Activated B cell treated with CpG ODN at 0.5 μM for 24 hours (primary cell): ENCODE measurements at regions of chr3 and their contacts with region 1.

Region 1: GRCh38 chr3:172536993-172537419 is 13.8 kb upstream of the TNFSF10 start:
- DNase-seq: no peak
- ATAC-seq: no peak
- H3K4me3 Mint-ChIP-seq: no peak overlapping the region
- H3K27ac Mint-ChIP-seq: peak overlapping the region; percentile 60
- H3K4me1 Mint-ChIP-seq: peaks cover 11% of the 10 kb centered on the region
- H3K27me3 Mint-ChIP-seq: no peaks in the 10 kb centered on the region
- CTCF ChIP-seq: no peak

Region 2: GRCh38 chr3:171218069-171218468 is 1318.9 kb before region 1 on chr3:
- CTCF ChIA-PET with region 1: no interaction called
- POLR2A ChIA-PET with region 1: no interaction called
- intact Hi-C with region 1: no loop called
- DNase-seq: no peak
- ATAC-seq: no peak
- H3K4me3 Mint-ChIP-seq: no peak overlapping the region
- H3K27ac Mint-ChIP-seq: no peak overlapping the region
- H3K4me1 Mint-ChIP-seq: no peaks in the 10 kb centered on the region
- H3K27me3 Mint-ChIP-seq: no peaks in the 10 kb centered on the region
- CTCF ChIP-seq: no peak

Region 3: GRCh38 chr3:172074586-172074985 is 462.4 kb before region 1 on chr3:
- CTCF ChIA-PET with region 1: no interaction called
- POLR2A ChIA-PET with region 1: no interaction called
- intact Hi-C with region 1: no loop called
- DNase-seq: no peak
- ATAC-seq: no peak
- H3K4me3 Mint-ChIP-seq: no peak overlapping the region
- H3K27ac Mint-ChIP-seq: no peak overlapping the region
- H3K4me1 Mint-ChIP-seq: no peaks in the 10 kb centered on the region
- H3K27me3 Mint-ChIP-seq: no peaks in the 10 kb centered on the region
- CTCF ChIP-seq: no peak

Region 4: DNA sequence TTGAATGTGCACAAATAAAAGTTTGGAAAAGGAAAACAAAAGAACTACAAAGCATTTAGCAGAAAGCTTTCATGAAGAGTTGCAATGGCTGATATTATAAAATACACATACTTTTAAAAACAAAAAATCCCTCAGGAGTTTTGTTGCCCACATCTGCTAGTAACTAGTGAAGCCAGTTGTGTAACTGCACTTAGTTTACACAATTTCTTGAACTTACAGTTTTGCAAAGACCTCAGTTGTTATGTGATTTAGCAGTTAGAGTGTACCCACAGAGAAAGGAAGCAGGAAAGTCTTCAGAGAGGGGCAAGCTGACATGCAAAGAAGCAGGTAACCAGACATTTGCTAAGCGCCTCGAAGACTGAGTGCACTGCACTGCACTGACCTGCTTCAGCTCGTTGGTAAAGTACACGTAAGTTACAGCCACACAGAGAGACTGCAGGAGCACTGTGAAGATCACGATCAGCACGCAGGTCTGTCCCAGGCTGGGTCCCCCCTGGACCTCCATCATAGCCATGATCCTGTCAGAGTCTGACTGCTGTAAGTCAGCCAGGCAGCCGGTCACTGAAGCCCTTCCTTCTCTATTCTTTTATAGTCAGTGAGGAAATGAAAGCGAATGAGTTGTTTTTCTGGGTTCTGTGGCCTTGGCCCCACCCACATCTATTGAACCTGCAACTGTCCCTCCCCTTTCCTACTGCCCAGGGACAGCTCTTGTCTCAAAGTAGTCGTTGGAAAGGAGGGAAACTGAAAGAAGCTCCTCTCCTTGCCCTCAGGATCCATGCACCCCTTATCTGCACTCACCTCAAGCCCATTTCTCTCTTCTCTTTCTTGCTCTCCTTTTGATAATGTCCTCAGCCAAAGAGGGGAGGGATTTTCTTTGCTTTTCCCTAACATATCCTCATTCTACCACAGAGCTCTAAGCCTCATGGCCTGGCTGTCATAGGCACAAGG is 13.9 kb before region 1 on chr3 and contains the start of gene TNFSF10:
- CTCF ChIA-PET with region 1: no interaction called
- POLR2A ChIA-PET with region 1: no interaction called
- intact Hi-C with region 1: loop called (anchors 2 kb)
- DNase-seq: peak; percentile 46
- ATAC-seq: peak; percentile 88
- H3K4me3 Mint-ChIP-seq: peak within 1 kb of the TSS; percentile 94
- H3K27ac Mint-ChIP-seq: peak within 1 kb of the TSS; percentile 93
- H3K4me1 Mint-ChIP-seq: peaks cover 51% of the 10 kb centered on the region
- H3K27me3 Mint-ChIP-seq: no peaks in the 10 kb centered on the region
- CTCF ChIP-seq: no peak
- total RNA-seq, gene TNFSF10: 7.2 and 7.4 TPM in 2 replicates

Region 5: GRCh38 chr3:172726382-172726781 is 189.4 kb after region 1 on chr3:
- CTCF ChIA-PET with region 1: no interaction called
- POLR2A ChIA-PET with region 1: no interaction called
- intact Hi-C with region 1: no loop called
- DNase-seq: no peak
- ATAC-seq: no peak
- H3K4me3 Mint-ChIP-seq: no peak overlapping the region
- H3K27ac Mint-ChIP-seq: no peak overlapping the region
- H3K4me1 Mint-ChIP-seq: peaks cover 5% of the 10 kb centered on the region
- H3K27me3 Mint-ChIP-seq: peaks cover 2% of the 10 kb centered on the region
- CTCF ChIP-seq: no peak